ENCODE measurements at regions of chr13 and their contacts with region 1.

Region 1: DNA sequence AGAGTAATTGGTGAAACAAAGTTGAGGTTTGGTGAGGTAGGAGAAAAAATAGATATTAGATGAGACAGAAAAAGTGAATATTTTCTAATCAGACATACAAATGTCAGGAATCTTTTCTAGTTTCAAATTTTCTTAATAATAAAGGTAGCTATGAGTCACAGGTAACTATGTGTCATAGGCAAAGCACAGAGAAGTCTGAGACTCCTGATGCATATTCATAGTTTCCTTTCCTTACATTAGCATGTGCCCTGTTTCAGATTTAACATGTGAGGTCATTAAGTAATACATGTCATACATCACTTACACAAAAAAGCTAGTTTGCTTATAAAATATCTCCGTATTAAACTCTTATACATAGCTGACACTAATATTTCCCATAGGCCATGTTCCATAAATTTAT is 1141.3 kb upstream of the PCDH20 start:
- DNase-seq: no peak
- CTCF ChIP-seq: no peak

Region 2: GRCh38 chr13:62473190-62473943 is 83.6 kb before region 1 on chr13:
- in situ Hi-C with region 1: loop called (anchors 25 kb)
- DNase-seq: no peak
- CTCF ChIP-seq: no peak

Region 3: GRCh38 chr13:62643007-62643483 is 86.1 kb after region 1 on chr13:
- in situ Hi-C with region 1: no loop called
- DNase-seq: no peak
- CTCF ChIP-seq: no peak